Esophagus muscularis mucosa (tissue), 4 donors: ENCODE measurements at regions of chrX and their contacts with region 1.

Region 1: GRCh38 chrX:55057675-55058249 is 17.1 kb upstream of the PAGE2B start:
- DNase-seq: no peak
- H3K4me3 ChIP-seq: peak overlapping the region in 2 of 4 donors; percentile 4 to 34
- H3K27ac ChIP-seq: no peak overlapping the region
- H3K4me1 ChIP-seq: peaks cover 0 to 6% (median 0%) of the 10 kb centered on the region in 4 donors
- H3K27me3 ChIP-seq: no peaks in the 10 kb centered on the region
- CTCF ChIP-seq: peak; percentile 63 to 74 (median 71)
- EP300 ChIP-seq: no peak
- POLR2A ChIP-seq: no peak

Region 2: GRCh38 chrX:54891573-54891972 is 166.2 kb before region 1 on chrX:
- intact Hi-C with region 1: loop called (anchors 10 kb)
- DNase-seq: no peak
- H3K4me3 ChIP-seq: no peak overlapping the region
- H3K27ac ChIP-seq: no peak overlapping the region
- H3K4me1 ChIP-seq: no peaks in the 10 kb centered on the region
- H3K27me3 ChIP-seq: no peaks in the 10 kb centered on the region
- CTCF ChIP-seq: peak in 1 of 3 experiments; percentile 42
- EP300 ChIP-seq: no peak
- POLR2A ChIP-seq: no peak

Region 3: GRCh38 chrX:54921427-54922021 is 136.2 kb before region 1 on chrX:
- intact Hi-C with region 1: no loop called
- DNase-seq: no peak
- H3K4me3 ChIP-seq: peak overlapping the region; percentile 52 to 62 (median 56)
- H3K27ac ChIP-seq: peak overlapping the region in 1 of 4 donors; percentile 47
- H3K4me1 ChIP-seq: peaks cover 0 to 6% (median 2%) of the 10 kb centered on the region in 4 donors
- H3K27me3 ChIP-seq: no peaks in the 10 kb centered on the region
- CTCF ChIP-seq: no peak
- EP300 ChIP-seq: no peak
- POLR2A ChIP-seq: no peak